ENCODE measurements at regions of chr5 and their contacts with region 1.

Region 1: GRCh38 chr5:179596421-179596820 is 27.1 kb downstream of the HNRNPH1 start:
- DNase-seq: no peak
- CTCF ChIP-seq: no peak

Region 2: GRCh38 chr5:179585941-179586655 is 10.3 kb before region 1 on chr5:
- CTCF ChIA-PET with region 1: interaction called, 10 read pairs
- POLR2A ChIA-PET with region 1: no interaction called
- DNase-seq: no peak
- CTCF ChIP-seq: no peak